GM10248 (cell line): ENCODE measurements at regions of chr21 and their contacts with region 1.

Region 1: DNA sequence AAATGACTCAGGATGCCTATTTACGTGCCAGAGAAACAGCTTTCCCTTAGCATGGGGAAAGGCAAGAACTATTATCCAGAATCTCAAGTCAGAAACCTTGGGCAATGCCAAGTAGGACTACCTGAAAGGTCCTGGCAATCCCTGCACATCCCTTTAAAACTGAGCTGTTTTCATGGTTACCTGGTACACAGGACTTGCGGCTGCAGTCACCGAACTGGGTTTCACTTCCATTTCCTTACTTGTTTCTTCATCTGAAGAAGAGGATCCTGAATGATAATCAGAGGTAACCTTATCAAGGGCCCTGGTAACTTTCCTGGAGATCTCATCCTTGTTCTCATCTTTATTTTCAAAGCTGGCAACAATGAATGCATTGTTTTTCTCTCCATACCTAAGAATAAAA is 14.3 kb downstream of the BTG3 start:
- DNase-seq: peak; percentile 21
- CTCF ChIP-seq: no peak

Region 2: DNA sequence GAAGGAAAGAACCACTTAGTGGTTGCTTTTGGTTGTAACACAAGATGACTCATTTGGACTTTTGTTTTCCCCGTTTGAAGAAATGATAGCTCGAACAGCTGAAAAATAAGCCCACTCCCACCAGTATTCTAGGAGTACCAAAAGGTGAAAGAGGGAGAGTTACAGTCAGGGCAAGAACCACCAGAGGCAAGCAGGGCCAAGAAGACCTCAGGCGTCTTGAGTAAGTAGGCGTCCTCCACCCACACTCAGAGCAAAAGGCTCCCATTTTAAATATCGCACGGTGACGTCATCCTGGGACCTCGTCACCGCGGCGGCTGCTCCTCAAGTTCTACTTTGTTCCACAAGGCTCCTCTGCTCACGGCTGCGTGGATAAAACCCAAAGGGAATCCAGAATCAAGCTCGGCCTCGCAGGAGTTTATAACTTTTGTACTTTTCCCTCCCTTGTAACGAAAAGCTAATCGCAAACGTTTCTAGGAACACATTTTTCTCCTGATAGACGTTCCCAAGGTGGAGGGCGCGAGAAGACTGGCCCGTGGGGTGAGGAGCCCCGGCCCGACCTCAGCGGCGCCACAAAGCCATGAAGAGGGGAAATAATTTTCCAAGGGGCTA is 13.1 kb after region 1 on chr21:
- CTCF ChIA-PET with region 1: interaction called, 14 read pairs
- POLR2A ChIA-PET with region 1: no interaction called
- DNase-seq: peak; percentile 79
- CTCF ChIP-seq: no peak

Region 3: DNA sequence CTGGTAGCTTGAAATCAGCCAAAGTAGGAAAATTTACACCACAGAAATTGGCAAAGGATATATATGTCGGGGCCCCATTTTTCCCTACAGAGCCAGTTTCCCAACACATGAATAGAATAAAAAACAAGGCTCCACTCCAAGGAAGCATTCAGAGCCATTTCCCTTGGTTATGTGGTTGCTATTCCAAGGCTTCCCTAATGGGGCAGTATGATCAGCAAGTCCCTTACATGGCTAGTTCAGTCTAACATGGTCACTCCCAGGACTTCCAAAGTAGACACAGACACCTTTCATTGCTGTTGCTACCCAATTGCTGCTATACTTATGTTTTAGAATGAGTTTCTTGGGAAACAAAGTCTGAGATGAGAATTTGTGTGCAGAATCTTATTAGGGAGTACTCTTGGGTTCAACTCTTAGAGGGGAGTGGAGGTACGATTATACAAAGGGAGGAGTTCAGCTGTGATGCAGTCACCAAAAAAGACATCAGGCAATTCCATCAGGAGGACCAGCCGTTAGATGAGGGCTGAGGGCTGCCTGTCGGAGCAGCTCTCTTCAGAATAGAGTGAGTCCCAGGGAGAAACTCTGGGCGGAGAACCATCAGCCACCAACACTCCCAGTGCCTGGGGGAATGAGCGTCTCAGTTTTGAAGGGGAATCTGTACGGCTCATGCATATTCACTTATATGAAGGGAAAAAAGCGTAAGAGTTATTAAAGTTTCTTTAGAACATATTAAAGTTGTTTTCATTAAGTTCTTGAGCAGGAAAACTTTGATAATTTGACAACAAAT is 127.8 kb after region 1 on chr21:
- CTCF ChIA-PET with region 1: no interaction called
- POLR2A ChIA-PET with region 1: no interaction called
- DNase-seq: no peak
- CTCF ChIP-seq: no peak